Heart right ventricle (tissue), 16 donors: ENCODE measurements at regions of chr9 and their contacts with region 1.

Region 1: GRCh38 chr9:100028201-100028784 is 70.5 kb downstream of the ERP44 start:
- DNase-seq: peak; percentile 50 to 74
- ATAC-seq: peak; percentile 78 to 95 (median 91)
- H3K4me3 ChIP-seq: no peak overlapping the region
- H3K27ac ChIP-seq: no peak overlapping the region
- H3K4me1 ChIP-seq: peaks cover 0 to 18% (median 0%) of the 10 kb centered on the region in 9 donors
- H3K27me3 ChIP-seq: no peaks in the 10 kb centered on the region
- CTCF ChIP-seq: peak; percentile 78 to 98 (median 94)

Region 2: GRCh38 chr9:100216178-100216787 is 188.0 kb after region 1 on chr9:
- intact Hi-C with region 1: loop called in 9 of 10 experiments (anchors 5 kb)
- DNase-seq: peak in 1 of 2 donors; percentile 54
- ATAC-seq: peak in 6 of 8 donors; percentile 48 to 70 (median 58)
- H3K4me3 ChIP-seq: no peak overlapping the region
- H3K27ac ChIP-seq: no peak overlapping the region
- H3K4me1 ChIP-seq: peaks cover 0 to 14% (median 0%) of the 10 kb centered on the region in 9 donors
- H3K27me3 ChIP-seq: no peaks in the 10 kb centered on the region
- CTCF ChIP-seq: peak; percentile 44 to 75 (median 62)

Region 3: DNA sequence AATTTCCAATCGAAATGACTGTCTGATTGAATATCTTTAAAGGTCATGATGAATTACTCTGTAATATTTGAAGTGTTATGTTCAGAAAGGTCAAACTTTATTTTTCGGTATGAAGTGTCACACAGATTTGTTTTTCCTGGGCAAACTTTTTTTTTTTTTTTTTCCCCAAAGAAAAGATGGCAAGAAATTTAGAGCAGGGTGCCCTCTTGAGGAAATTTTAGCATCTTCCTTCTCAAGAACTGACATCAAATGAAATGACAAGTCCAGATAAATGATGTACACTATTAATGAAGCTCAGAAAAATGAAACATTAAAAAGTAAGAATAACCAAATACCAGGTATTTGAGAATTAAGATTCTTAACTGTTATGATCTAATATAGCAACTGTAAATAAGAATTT is 194.4 kb after region 1 on chr9:
- intact Hi-C with region 1: loop called in 9 of 10 experiments (anchors 2 to 5 kb)
- DNase-seq: no peak
- ATAC-seq: no peak
- H3K4me3 ChIP-seq: no peak overlapping the region
- H3K27ac ChIP-seq: no peak overlapping the region
- H3K4me1 ChIP-seq: peaks cover 0 to 13% (median 0%) of the 10 kb centered on the region in 9 donors
- H3K27me3 ChIP-seq: no peaks in the 10 kb centered on the region
- CTCF ChIP-seq: peak in 7 of 9 donors; percentile 15 to 61 (median 41)

Region 4: GRCh38 chr9:100322954-100323536 is 294.8 kb after region 1 on chr9:
- intact Hi-C with region 1: loop called in 8 of 10 experiments (anchors 5 to 10 kb)
- DNase-seq: no peak
- ATAC-seq: peak in 1 of 8 donors; percentile 29
- H3K4me3 ChIP-seq: no peak overlapping the region
- H3K27ac ChIP-seq: no peak overlapping the region
- H3K4me1 ChIP-seq: peaks cover 0 to 5% (median 0%) of the 10 kb centered on the region in 9 donors
- H3K27me3 ChIP-seq: no peaks in the 10 kb centered on the region
- CTCF ChIP-seq: peak; percentile 43 to 74 (median 67)